ENCODE measurements at regions of chr16 and their contacts with region 1.

Region 1: DNA sequence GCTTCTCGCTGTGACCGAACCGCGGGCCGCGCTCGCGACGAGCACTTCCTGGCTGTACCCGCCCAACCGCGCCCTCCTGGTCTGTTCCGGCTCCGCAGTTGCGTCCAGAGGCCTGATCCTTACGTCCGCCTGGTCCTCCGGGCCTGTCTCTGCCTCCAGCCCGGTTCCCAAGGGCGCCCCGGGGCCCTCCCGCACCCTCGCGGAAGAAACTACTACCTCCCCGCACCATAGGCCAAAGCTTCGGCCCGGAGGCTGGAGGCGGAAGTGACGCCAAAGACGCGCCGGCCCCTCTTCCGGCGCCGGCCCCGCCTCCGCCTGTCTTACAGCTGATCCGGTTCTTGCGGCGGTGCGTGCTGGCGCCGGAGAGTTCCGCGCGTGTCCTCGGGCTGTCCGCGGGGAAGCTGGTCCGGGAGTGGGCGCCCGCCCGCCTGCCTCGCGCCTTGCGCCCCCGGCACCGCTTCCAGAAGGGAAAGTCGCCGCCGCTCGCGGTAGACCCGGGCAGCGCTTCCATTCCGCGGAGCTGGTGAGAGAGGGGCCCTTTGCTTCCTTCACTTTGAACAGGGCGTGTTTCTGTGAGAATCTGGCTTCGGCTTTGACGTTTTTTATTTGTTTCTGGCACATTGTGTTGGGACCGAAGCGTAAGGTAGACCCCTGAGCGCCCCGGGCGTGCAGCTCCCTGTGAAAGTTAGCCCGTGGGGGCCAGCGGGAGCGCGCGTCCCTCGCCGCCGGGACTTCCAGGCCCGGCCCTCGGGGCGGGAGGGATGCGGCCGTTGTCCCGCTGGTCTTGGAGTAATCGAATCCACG is at the start of gene ZNF778:
- DNase-seq: peak; percentile 77 to 86 (median 84)
- ATAC-seq: peak; percentile 88
- H3K4me3 ChIP-seq: peak within 1 kb of the TSS; percentile 56
- H3K4me3 Mint-ChIP-seq: peak within 1 kb of the TSS; percentile 68 to 96 (median 92)
- H3K27ac ChIP-seq: peak within 1 kb of the TSS; percentile 99
- H3K27ac Mint-ChIP-seq: peak within 1 kb of the TSS; percentile 68 to 99 (median 86)
- H3K4me1 ChIP-seq: peaks cover 5 to 10% of the 10 kb centered on the region in 2 donors
- H3K4me1 Mint-ChIP-seq: peaks cover 12 to 39% (median 29%) of the 10 kb centered on the region in 7 donors
- H3K27me3 ChIP-seq: no peaks in the 10 kb centered on the region
- H3K27me3 Mint-ChIP-seq: no peaks in the 10 kb centered on the region
- total RNA-seq, gene ZNF778: 6.0 to 13.5 (median 6.5) TPM

Region 2: DNA sequence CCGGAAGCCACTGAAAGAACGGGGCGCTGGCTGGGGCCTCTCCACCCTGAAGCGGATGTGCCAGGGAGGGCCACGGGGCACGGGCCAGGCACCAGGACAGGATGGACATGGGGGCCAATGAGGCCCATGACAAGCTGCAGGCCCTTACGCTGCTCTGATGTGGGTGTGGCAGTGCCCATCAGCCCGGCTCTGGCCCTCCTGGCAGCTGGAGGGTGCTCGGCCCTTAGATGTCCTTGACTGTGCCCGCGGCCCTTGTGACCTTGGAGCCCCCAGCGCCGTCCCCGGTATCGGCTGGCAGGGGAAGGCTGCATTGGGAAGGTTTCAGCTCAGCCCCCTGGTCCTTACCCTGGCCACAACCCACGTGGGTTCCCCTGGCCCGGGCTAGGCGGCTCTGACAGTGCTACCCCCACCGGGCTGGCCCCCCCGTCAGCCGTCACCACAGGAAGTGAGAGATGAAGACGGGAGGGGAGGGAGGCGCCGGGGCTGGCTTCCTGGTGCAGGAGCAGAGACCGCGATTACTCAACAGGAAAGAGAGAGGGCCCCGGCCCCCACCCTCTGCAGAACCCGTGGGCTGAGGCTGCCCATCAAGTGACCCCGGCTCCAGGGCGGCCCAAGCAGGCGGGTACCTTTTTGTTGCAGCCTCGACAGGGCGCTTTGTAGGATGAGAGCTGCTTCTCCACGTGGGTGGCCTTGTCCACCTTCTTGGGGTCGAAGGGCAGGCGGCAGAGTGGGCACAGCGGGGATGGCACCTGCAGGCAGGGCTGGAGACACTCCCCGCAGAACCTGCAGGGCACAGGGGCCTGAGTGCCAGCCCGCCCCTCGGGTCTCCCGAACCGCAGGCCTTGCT is 516.7 kb before region 1 on chr16:
- CTCF ChIA-PET with region 1: interaction called, 3 read pairs
- POLR2A ChIA-PET with region 1: no interaction called
- intact Hi-C with region 1: loop called (anchors 1 kb)
- DNase-seq: peak; percentile 86 to 96 (median 93)
- ATAC-seq: peak; percentile 91
- H3K4me3 ChIP-seq: peak overlapping the region; percentile 56
- H3K4me3 Mint-ChIP-seq: peak overlapping the region; percentile 78 to 98 (median 94)
- H3K27ac ChIP-seq: peak overlapping the region; percentile 88
- H3K27ac Mint-ChIP-seq: peak overlapping the region; percentile 85 to 98 (median 97)
- H3K4me1 ChIP-seq: peaks cover 32 to 60% of the 10 kb centered on the region in 2 donors
- H3K4me1 Mint-ChIP-seq: peaks cover 36 to 69% (median 47%) of the 10 kb centered on the region in 7 donors
- H3K27me3 ChIP-seq: no peaks in the 10 kb centered on the region
- H3K27me3 Mint-ChIP-seq: no peaks in the 10 kb centered on the region

Region 3: GRCh38 chr16:88785106-88785924 is 432.3 kb before region 1 on chr16 and contains the start of gene PIEZO1:
- CTCF ChIA-PET with region 1: no interaction called
- POLR2A ChIA-PET with region 1: no interaction called
- intact Hi-C with region 1: loop called (anchors 2 kb)
- DNase-seq: peak; percentile 76 to 93 (median 85)
- ATAC-seq: peak; percentile 77
- H3K4me3 ChIP-seq: peak within 1 kb of the TSS; percentile 54
- H3K4me3 Mint-ChIP-seq: peak within 1 kb of the TSS; percentile 66 to 87 (median 76)
- H3K27ac ChIP-seq: peak within 1 kb of the TSS; percentile 72
- H3K27ac Mint-ChIP-seq: peak within 1 kb of the TSS in 6 of 9 donors; percentile 45 to 92 (median 61)
- H3K4me1 ChIP-seq: peaks cover 48 to 49% of the 10 kb centered on the region in 2 donors
- H3K4me1 Mint-ChIP-seq: peaks cover 35 to 45% (median 45%) of the 10 kb centered on the region in 7 donors
- H3K27me3 ChIP-seq: no peaks in the 10 kb centered on the region
- H3K27me3 Mint-ChIP-seq: no peaks in the 10 kb centered on the region
- total RNA-seq, gene PIEZO1: 84.5 to 237 (median 124) TPM

Region 4: DNA sequence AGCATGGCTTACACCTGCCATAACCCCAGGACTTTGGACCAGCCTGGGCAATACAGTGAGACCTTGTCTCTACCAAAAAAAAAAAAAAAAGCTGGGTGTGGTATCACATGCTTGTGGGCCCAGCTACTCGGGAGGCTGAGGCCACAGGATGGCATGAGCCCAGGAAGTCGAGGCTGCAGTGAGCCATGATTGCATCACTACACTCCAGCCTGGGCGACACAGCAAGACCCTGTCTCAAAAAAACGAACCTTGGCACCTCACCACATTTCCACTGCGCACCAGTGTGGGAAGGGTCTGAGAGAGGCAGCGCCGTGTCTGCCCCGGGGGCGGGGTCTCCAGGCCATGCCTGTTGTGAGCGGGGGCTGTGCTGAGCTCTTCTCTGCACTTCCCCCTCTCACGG is 117.7 kb before region 1 on chr16:
- CTCF ChIA-PET with region 1: interaction called, 3 read pairs
- POLR2A ChIA-PET with region 1: no interaction called
- intact Hi-C with region 1: loop called in 1 of 2 experiments (anchors 2 kb)
- DNase-seq: no peak
- ATAC-seq: no peak
- H3K4me3 ChIP-seq: no peak overlapping the region
- H3K4me3 Mint-ChIP-seq: peak overlapping the region in 7 of 10 donors; percentile 20 to 96 (median 53)
- H3K27ac ChIP-seq: no peak overlapping the region
- H3K27ac Mint-ChIP-seq: peak overlapping the region; percentile 51 to 100 (median 83)
- H3K4me1 ChIP-seq: peaks cover 42 to 66% of the 10 kb centered on the region in 2 donors
- H3K4me1 Mint-ChIP-seq: peaks cover 46 to 84% (median 70%) of the 10 kb centered on the region in 7 donors
- H3K27me3 ChIP-seq: no peaks in the 10 kb centered on the region
- H3K27me3 Mint-ChIP-seq: no peaks in the 10 kb centered on the region

Region 5: GRCh38 chr16:89193021-89193575 is 24.5 kb before region 1 on chr16:
- CTCF ChIA-PET with region 1: no interaction called
- POLR2A ChIA-PET with region 1: interaction called, 4 read pairs
- intact Hi-C with region 1: loop called in 1 of 2 experiments (anchors 2 kb)
- DNase-seq: peak in 6 of 9 donors; percentile 45 to 61 (median 52)
- ATAC-seq: no peak
- H3K4me3 ChIP-seq: no peak overlapping the region
- H3K4me3 Mint-ChIP-seq: peak overlapping the region in 3 of 10 donors; percentile 6 to 47 (median 25)
- H3K27ac ChIP-seq: no peak overlapping the region
- H3K27ac Mint-ChIP-seq: no peak overlapping the region
- H3K4me1 ChIP-seq: no peaks in the 10 kb centered on the region
- H3K4me1 Mint-ChIP-seq: peaks cover 0 to 5% (median 0%) of the 10 kb centered on the region in 7 donors
- H3K27me3 ChIP-seq: no peaks in the 10 kb centered on the region
- H3K27me3 Mint-ChIP-seq: peaks cover 0 to 8% (median 2%) of the 10 kb centered on the region in 5 donors

Region 6: GRCh38 chr16:89410794-89411309 is 193.3 kb after region 1 on chr16:
- CTCF ChIA-PET with region 1: no interaction called
- POLR2A ChIA-PET with region 1: no interaction called
- intact Hi-C with region 1: no loop called
- DNase-seq: peak in 3 of 9 donors; percentile 17 to 34 (median 26)
- ATAC-seq: peak; percentile 28
- H3K4me3 ChIP-seq: no peak overlapping the region
- H3K4me3 Mint-ChIP-seq: peak overlapping the region; percentile 6 to 86 (median 76)
- H3K27ac ChIP-seq: peak overlapping the region; percentile 72
- H3K27ac Mint-ChIP-seq: peak overlapping the region; percentile 89 to 96 (median 93)
- H3K4me1 ChIP-seq: peaks cover 70 to 84% of the 10 kb centered on the region in 2 donors
- H3K4me1 Mint-ChIP-seq: peaks cover 71 to 92% (median 78%) of the 10 kb centered on the region in 7 donors
- H3K27me3 ChIP-seq: no peaks in the 10 kb centered on the region
- H3K27me3 Mint-ChIP-seq: no peaks in the 10 kb centered on the region

Region 7: DNA sequence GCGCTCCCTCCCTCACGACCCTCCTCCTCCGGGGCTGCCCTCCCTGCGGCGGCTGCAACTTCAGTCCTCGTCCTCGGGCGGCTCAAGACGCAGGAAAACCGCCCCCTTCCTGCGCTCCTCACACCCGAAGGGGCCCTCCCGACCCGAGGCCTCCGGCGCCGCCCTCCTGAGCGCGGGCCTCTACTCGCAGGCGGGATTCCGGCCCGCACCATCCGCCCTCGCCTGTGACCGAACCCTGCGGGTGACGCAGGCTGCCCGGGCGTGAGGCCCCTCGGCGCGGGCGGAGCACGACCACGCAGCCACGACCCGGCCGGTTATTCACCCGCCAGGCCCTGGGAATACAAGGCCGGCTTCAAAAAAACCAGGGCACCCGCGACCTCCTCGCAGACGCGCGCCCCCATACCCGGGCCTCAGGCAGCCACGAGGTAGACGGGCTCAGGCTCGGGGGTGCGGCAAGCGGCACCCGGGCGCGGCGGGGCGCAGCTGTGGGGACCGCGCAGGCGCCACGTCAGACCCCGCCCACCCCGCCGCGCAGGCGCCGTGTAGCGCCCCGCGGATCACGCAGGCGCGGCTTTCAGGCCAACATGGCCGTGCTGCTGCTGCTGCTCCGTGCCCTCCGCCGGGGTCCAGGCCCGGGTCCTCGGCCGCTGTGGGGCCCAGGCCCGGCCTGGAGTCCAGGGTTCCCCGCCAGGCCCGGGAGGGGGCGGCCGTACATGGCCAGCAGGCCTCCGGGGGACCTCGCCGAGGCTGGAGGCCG is 290.4 kb after region 1 on chr16 and contains the start of gene SPG7:
- CTCF ChIA-PET with region 1: no interaction called
- POLR2A ChIA-PET with region 1: interaction called, 3 read pairs
- intact Hi-C with region 1: loop called in 1 of 2 experiments (anchors 1 kb)
- DNase-seq: peak; percentile 82 to 98 (median 95)
- ATAC-seq: peak; percentile 83
- H3K4me3 ChIP-seq: peak within 1 kb of the TSS; percentile 64
- H3K4me3 Mint-ChIP-seq: peak within 1 kb of the TSS; percentile 82 to 96 (median 95)
- H3K27ac ChIP-seq: peak within 1 kb of the TSS; percentile 86
- H3K27ac Mint-ChIP-seq: peak within 1 kb of the TSS; percentile 87 to 97 (median 94)
- H3K4me1 ChIP-seq: peaks cover 30 to 33% of the 10 kb centered on the region in 2 donors
- H3K4me1 Mint-ChIP-seq: peaks cover 14 to 46% (median 31%) of the 10 kb centered on the region in 7 donors
- H3K27me3 ChIP-seq: no peaks in the 10 kb centered on the region
- H3K27me3 Mint-ChIP-seq: no peaks in the 10 kb centered on the region
- total RNA-seq, gene SPG7: 129 to 181 (median 170) TPM

Region 8: GRCh38 chr16:89737341-89738071 is 519.9 kb after region 1 on chr16:
- CTCF ChIA-PET with region 1: no interaction called
- POLR2A ChIA-PET with region 1: no interaction called
- intact Hi-C with region 1: no loop called
- DNase-seq: peak in 7 of 9 donors; percentile 63 to 83 (median 76)
- ATAC-seq: peak; percentile 86
- H3K4me3 ChIP-seq: no peak overlapping the region
- H3K4me3 Mint-ChIP-seq: peak overlapping the region; percentile 39 to 80 (median 66)
- H3K27ac ChIP-seq: peak overlapping the region; percentile 46
- H3K27ac Mint-ChIP-seq: peak overlapping the region; percentile 68 to 94 (median 86)
- H3K4me1 ChIP-seq: peaks cover 28 to 40% of the 10 kb centered on the region in 2 donors
- H3K4me1 Mint-ChIP-seq: peaks cover 4 to 70% (median 37%) of the 10 kb centered on the region in 7 donors
- H3K27me3 ChIP-seq: no peaks in the 10 kb centered on the region
- H3K27me3 Mint-ChIP-seq: no peaks in the 10 kb centered on the region